ENCODE measurements at regions of chr1 and their contacts with region 1.

Region 1: GRCh38 chr1:180881806-180882509 is 30.7 kb upstream of the KIAA1614 start:
- DNase-seq: no peak
- ATAC-seq: peak; percentile 56
- H3K4me3 ChIP-seq: no peak overlapping the region
- H3K27ac ChIP-seq: no peak overlapping the region
- H3K4me1 ChIP-seq: no peaks in the 10 kb centered on the region
- H3K27me3 ChIP-seq: no peaks in the 10 kb centered on the region

Region 2: GRCh38 chr1:181159451-181160140 is 277.6 kb after region 1 on chr1:
- intact Hi-C with region 1: loop called in 1 of 2 experiments (anchors 5 kb)
- DNase-seq: no peak
- ATAC-seq: peak; percentile 37
- H3K4me3 ChIP-seq: no peak overlapping the region
- H3K27ac ChIP-seq: no peak overlapping the region
- H3K4me1 ChIP-seq: no peaks in the 10 kb centered on the region
- H3K27me3 ChIP-seq: no peaks in the 10 kb centered on the region

Region 3: GRCh38 chr1:181166377-181167196 is 284.6 kb after region 1 on chr1:
- intact Hi-C with region 1: loop called (anchors 5 kb)
- DNase-seq: peak; percentile 75 to 79
- ATAC-seq: peak; percentile 92
- H3K4me3 ChIP-seq: no peak overlapping the region
- H3K27ac ChIP-seq: no peak overlapping the region
- H3K4me1 ChIP-seq: no peaks in the 10 kb centered on the region
- H3K27me3 ChIP-seq: no peaks in the 10 kb centered on the region